Activated CD8-positive, alpha-beta T cell treated with anti-CD3 and anti-CD28 coated beads, Interleukin-2, amount 10 ng/mL, durations not matched to agents 7 days and 5 days (primary cell): ENCODE measurements at regions of chr1 and their contacts with region 1.

Region 1: GRCh38 chr1:153922972-153923925 is at the start of gene GATAD2B:
- DNase-seq: peak; percentile 100
- ATAC-seq: peak; percentile 96
- H3K4me3 Mint-ChIP-seq: peak within 1 kb of the TSS; percentile 95
- H3K27ac Mint-ChIP-seq: peak within 1 kb of the TSS; percentile 96
- H3K4me1 Mint-ChIP-seq: peaks cover 38% of the 10 kb centered on the region
- H3K27me3 Mint-ChIP-seq: no peaks in the 10 kb centered on the region
- total RNA-seq, gene GATAD2B: 70.2 to 71.7 TPM

Region 2: GRCh38 chr1:153646672-153647374 is 276.4 kb before region 1 on chr1:
- CTCF ChIA-PET with region 1: no interaction called
- POLR2A ChIA-PET with region 1: no interaction called
- DNase-seq: no peak
- ATAC-seq: no peak
- H3K4me3 Mint-ChIP-seq: no peak overlapping the region
- H3K27ac Mint-ChIP-seq: peak overlapping the region; percentile 77
- H3K4me1 Mint-ChIP-seq: peaks cover 59% of the 10 kb centered on the region
- H3K27me3 Mint-ChIP-seq: no peaks in the 10 kb centered on the region

Region 3: GRCh38 chr1:153796791-153797659 is 126.2 kb before region 1 on chr1:
- CTCF ChIA-PET with region 1: interaction called, 32 read pairs
- POLR2A ChIA-PET with region 1: no interaction called
- DNase-seq: peak; percentile 93
- ATAC-seq: peak; percentile 83
- H3K4me3 Mint-ChIP-seq: no peak overlapping the region
- H3K27ac Mint-ChIP-seq: peak overlapping the region; percentile 79
- H3K4me1 Mint-ChIP-seq: peaks cover 58% of the 10 kb centered on the region
- H3K27me3 Mint-ChIP-seq: no peaks in the 10 kb centered on the region

Region 4: DNA sequence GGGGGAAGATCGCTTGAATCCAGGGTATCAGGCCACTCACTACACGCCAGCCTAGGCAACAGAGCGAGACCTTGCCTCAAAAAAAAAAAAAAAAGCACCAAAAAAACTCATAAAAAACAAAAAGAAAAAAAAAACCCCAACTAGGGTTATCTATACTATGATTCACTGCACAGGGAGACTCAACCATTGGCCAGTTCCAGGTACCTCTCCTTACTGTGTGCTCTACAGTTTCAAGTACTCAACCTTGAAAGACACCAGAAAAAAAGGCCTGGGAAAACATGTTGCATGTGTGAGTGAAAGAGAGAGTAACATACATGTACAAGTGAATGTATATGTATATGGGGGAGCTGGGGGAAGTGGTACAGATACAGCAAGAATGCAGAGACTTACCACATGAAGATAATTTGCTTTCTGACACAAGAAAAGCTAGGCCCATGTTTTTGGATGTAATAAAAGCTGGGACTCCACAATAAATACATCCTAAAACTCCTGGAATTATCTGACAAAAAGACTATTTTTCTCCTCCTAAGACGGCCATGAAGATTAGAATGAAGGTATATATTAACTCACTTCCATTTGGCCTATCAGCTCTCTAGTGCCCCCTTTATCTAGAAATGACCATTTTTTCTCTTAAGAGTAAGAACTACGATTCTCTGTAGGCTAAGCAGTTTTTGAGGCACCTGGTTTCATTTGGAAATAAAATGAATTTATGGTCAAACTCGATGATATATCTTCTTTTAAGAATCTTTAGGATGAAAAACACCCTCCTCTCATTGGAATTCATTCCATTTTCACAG is 95.9 kb before region 1 on chr1:
- CTCF ChIA-PET with region 1: interaction called, 10 read pairs
- POLR2A ChIA-PET with region 1: interaction called, 4 read pairs
- DNase-seq: no peak
- ATAC-seq: no peak
- H3K4me3 Mint-ChIP-seq: no peak overlapping the region
- H3K27ac Mint-ChIP-seq: no peak overlapping the region
- H3K4me1 Mint-ChIP-seq: no peaks in the 10 kb centered on the region
- H3K27me3 Mint-ChIP-seq: no peaks in the 10 kb centered on the region

Region 5: DNA sequence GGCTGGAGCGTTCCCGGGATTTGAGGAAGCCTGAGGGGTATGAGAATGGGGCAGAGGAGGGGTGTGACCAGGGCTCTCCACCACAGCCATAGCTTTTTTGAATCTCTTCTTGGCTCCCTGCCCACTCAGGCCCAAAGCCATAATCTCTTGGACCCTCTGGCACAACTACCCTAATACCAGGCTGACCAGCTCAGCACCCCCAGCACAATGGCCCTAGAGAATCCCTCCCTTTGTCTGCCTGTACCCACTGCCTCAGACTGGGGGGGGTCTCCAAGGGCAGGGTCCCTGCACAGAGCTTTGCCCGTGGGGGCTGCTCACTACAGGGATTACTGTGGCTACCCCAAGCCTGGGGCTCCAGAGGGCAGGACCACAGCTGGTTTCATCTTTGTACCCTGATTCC is 15.8 kb after region 1 on chr1:
- CTCF ChIA-PET with region 1: interaction called, 70 read pairs
- POLR2A ChIA-PET with region 1: interaction called, 71 read pairs
- DNase-seq: no peak
- ATAC-seq: no peak
- H3K4me3 Mint-ChIP-seq: no peak overlapping the region
- H3K27ac Mint-ChIP-seq: no peak overlapping the region
- H3K4me1 Mint-ChIP-seq: peaks cover 9% of the 10 kb centered on the region
- H3K27me3 Mint-ChIP-seq: no peaks in the 10 kb centered on the region

Region 6: DNA sequence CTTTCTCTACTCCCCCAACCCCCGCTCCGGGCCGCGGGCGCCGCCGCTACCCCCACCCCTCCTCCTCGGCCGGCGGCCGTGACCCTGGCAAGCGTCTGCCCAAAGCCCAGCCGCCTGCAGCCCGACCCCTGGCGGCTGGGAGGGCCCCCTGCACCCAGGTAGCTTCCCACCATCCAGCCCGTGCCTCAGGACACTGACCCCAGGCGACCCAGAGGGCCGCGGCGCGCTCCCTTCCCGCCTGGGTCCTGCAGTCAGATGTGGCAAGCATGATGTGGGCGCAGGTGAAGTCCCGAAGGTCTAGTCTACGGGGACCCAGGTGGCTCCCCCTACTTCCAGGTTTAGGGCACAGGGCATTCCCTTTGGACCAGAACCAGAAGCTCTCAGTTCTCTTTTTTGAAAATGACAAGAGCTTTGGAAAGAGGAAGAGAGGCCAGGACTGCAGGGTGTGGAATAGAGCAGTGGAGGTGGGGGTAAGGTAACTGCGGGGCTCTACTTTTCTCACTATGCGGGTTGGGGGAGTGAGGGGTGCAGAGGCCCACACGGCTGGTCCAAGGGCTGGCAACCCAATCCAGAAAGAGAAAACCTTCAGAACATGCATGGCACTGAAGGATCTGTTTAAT is 23.5 kb after region 1 on chr1 and contains the start of gene DENND4B:
- CTCF ChIA-PET with region 1: interaction called, 70 read pairs
- POLR2A ChIA-PET with region 1: interaction called, 71 read pairs
- DNase-seq: peak; percentile 81
- ATAC-seq: peak; percentile 66
- H3K4me3 Mint-ChIP-seq: peak within 1 kb of the TSS; percentile 96
- H3K27ac Mint-ChIP-seq: peak within 1 kb of the TSS; percentile 97
- H3K4me1 Mint-ChIP-seq: peaks cover 32% of the 10 kb centered on the region
- H3K27me3 Mint-ChIP-seq: no peaks in the 10 kb centered on the region
- total RNA-seq, gene DENND4B: 140 to 143 TPM

Region 7: GRCh38 chr1:153958111-153958960 is 35.1 kb after region 1 on chr1 and contains the start of gene CRTC2:
- CTCF ChIA-PET with region 1: interaction called, 4 read pairs
- POLR2A ChIA-PET with region 1: interaction called, 15 read pairs
- DNase-seq: peak; percentile 99
- ATAC-seq: peak; percentile 87
- H3K4me3 Mint-ChIP-seq: peak within 1 kb of the TSS; percentile 95
- H3K27ac Mint-ChIP-seq: peak within 1 kb of the TSS; percentile 94
- H3K4me1 Mint-ChIP-seq: peaks cover 70% of the 10 kb centered on the region
- H3K27me3 Mint-ChIP-seq: no peaks in the 10 kb centered on the region
- total RNA-seq, gene CRTC2: 85.1 to 104 TPM

Region 8: GRCh38 chr1:153967082-153968000 is 44.1 kb after region 1 on chr1 and contains the start of gene CREB3L4:
- CTCF ChIA-PET with region 1: interaction called, 7 read pairs
- POLR2A ChIA-PET with region 1: interaction called, 23 read pairs
- DNase-seq: peak; percentile 91
- ATAC-seq: peak; percentile 88
- H3K4me3 Mint-ChIP-seq: peak within 1 kb of the TSS; percentile 86
- H3K27ac Mint-ChIP-seq: peak within 1 kb of the TSS; percentile 93
- H3K4me1 Mint-ChIP-seq: peaks cover 58% of the 10 kb centered on the region
- H3K27me3 Mint-ChIP-seq: no peaks in the 10 kb centered on the region
- total RNA-seq, gene CREB3L4: 5.7 to 9.0 TPM

Region 9: GRCh38 chr1:154386643-154387352 is 463.5 kb after region 1 on chr1:
- CTCF ChIA-PET with region 1: no interaction called
- POLR2A ChIA-PET with region 1: no interaction called
- DNase-seq: peak; percentile 55
- ATAC-seq: peak; percentile 91
- H3K4me3 Mint-ChIP-seq: peak overlapping the region; percentile 51
- H3K27ac Mint-ChIP-seq: peak overlapping the region; percentile 88
- H3K4me1 Mint-ChIP-seq: peaks cover 26% of the 10 kb centered on the region
- H3K27me3 Mint-ChIP-seq: peaks cover 3% of the 10 kb centered on the region